H1 (cell line): ENCODE measurements at regions of chr20 and their contacts with region 1.

Region 1: GRCh38 chr20:31835977-31836852 is 9.2 kb downstream of the FOXS1 start:
- DNase-seq: no peak
- H3K4me3 ChIP-seq: no peak overlapping the region
- H3K27ac ChIP-seq: no peak overlapping the region
- H3K4me1 ChIP-seq: peaks cover 0 to 17% (median 16%) of the 10 kb centered on the region in 4 experiments; a peak in 6 of 7 replicates
- H3K27me3 ChIP-seq: no peaks in the 10 kb centered on the region
- CTCF ChIP-seq: no peak
- EP300 ChIP-seq: no peak
- POLR2A ChIP-seq: no peak
- RAD21 ChIP-seq: no peak

Region 2: GRCh38 chr20:31811796-31812728 is 24.2 kb before region 1 on chr20:
- CTCF ChIA-PET with region 1: interaction called, 19 read pairs
- POLR2A ChIA-PET with region 1: interaction called, 3 read pairs
- DNase-seq: no peak
- H3K4me3 ChIP-seq: no peak overlapping the region
- H3K27ac ChIP-seq: no peak overlapping the region
- H3K4me1 ChIP-seq: peaks cover 4 to 9% (median 8%) of the 10 kb centered on the region in 4 experiments; a peak in 6 of 7 replicates
- H3K27me3 ChIP-seq: no peaks in the 10 kb centered on the region
- CTCF ChIP-seq: no peak
- EP300 ChIP-seq: no peak
- POLR2A ChIP-seq: no peak
- RAD21 ChIP-seq: no peak